Mammary epithelial cell (primary cell): ENCODE measurements at regions of chr1 and their contacts with region 1.

Region 1: DNA sequence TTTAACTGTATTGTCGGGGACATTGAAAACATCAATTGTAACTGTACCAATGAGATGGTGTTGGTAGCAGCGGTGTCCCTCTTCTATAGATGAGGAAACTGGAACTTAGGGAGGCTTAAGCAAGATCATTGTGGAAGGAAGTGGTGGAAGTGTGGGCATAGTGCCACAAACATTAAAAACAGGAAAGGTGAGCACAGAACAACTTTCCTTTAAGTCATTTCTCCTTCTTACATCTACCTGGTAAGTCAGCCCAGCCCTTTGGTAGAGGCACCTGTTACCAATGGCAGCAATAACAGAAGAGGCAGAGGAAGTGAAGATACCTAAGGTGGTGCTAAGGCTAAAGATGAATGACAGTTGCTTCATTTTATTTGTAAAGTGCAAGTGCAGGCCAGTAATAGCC is 12.0 kb upstream of the CTSS start:
- DNase-seq: no peak
- H3K4me3 ChIP-seq: no peak overlapping the region
- H3K27ac ChIP-seq: no peak overlapping the region
- H3K4me1 ChIP-seq: no peaks in the 10 kb centered on the region
- H3K27me3 ChIP-seq: no peaks in the 10 kb centered on the region
- CTCF ChIP-seq: no peak

Region 2: GRCh38 chr1:150708595-150708994 is 68.9 kb before region 1 on chr1:
- CTCF ChIA-PET with region 1: no interaction called
- dilution Hi-C with region 1: no loop called
- in situ Hi-C with region 1: no loop called
- intact Hi-C with region 1: no loop called
- DNase-seq: no peak
- H3K4me3 ChIP-seq: no peak overlapping the region
- H3K27ac ChIP-seq: no peak overlapping the region
- H3K4me1 ChIP-seq: no peaks in the 10 kb centered on the region
- H3K27me3 ChIP-seq: no peaks in the 10 kb centered on the region
- CTCF ChIP-seq: no peak

Region 3: DNA sequence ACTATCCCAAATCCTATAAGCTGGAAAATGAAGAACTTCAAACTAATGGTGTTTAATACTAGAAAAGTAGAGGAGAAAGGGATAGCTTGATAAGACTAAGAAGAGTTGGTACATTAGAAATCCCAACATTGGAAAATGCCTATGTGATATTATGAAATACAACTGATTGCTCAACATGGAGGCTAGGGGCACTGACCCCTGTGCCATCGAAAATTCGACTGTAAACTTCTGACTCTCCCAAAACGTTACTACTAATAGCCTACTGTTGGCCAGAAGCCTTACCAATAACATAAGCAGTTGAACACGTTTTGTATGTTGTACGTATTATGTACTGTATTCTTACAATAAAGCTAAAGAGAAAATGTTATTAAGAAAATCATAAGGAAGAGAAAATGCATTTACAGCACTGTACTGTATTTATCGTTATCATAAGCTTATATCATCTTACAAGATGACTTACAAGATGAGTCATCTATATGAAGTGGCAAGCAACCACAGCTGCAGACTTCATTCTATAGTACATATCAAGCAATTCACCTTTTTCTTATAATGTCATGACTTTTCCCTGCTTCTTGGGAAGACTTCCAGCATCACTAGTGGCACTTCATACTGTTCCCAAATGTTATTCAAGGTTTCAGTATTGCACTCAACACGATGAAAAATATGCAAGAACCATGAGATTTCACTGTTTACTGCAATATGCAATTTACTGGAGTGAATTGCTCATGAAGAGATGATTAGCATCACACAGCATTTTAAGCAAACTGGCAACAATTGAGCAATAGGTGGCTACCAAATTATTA is 43.4 kb after region 1 on chr1:
- CTCF ChIA-PET with region 1: no interaction called
- dilution Hi-C with region 1: loop called (anchors 5 kb)
- in situ Hi-C with region 1: no loop called
- intact Hi-C with region 1: no loop called
- DNase-seq: peak; percentile 23
- H3K4me3 ChIP-seq: no peak overlapping the region
- H3K27ac ChIP-seq: no peak overlapping the region
- H3K4me1 ChIP-seq: peaks cover 6% of the 10 kb centered on the region
- H3K27me3 ChIP-seq: no peaks in the 10 kb centered on the region
- CTCF ChIP-seq: no peak

Region 4: DNA sequence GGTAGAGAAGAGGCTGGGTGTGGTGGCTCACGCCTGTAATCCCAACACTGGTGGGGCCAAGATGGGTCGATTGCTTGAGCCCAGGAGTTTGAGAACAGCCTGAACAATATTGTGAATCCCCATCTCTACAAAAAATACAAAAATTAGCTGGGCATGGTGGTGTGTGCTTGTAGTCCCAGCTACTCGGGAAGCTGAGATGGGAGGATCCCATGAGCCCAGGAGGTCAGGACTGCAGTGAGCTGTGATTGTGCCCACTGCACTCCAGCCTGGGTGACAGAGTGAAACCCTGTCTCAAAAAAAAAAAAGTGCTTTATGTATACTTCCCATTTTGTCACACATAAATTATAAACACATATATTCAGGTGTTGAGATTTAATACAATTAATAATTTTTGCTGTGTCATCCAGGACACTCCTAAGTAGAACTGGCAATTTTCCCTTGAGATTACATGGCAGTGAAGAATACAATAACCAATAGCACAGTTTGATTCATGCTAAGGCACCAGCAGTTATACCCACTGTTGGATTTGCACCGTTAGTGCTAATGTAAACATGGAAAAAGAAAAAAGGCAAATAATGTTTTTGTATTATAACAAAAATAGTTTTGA is 308.5 kb after region 1 on chr1:
- CTCF ChIA-PET with region 1: no interaction called
- dilution Hi-C with region 1: no loop called
- in situ Hi-C with region 1: no loop called
- intact Hi-C with region 1: no loop called
- DNase-seq: no peak
- H3K4me3 ChIP-seq: no peak overlapping the region
- H3K27ac ChIP-seq: no peak overlapping the region
- H3K4me1 ChIP-seq: no peaks in the 10 kb centered on the region
- H3K27me3 ChIP-seq: no peaks in the 10 kb centered on the region
- CTCF ChIP-seq: no peak